ENCODE measurements at regions of chrX and their contacts with region 1.

Region 1: GRCh38 chrX:15242899-15243555 is 26.9 kb downstream of the ASB9 start:
- DNase-seq: no peak
- H3K4me3 ChIP-seq: no peak overlapping the region
- H3K27ac ChIP-seq: no peak overlapping the region
- H3K4me1 ChIP-seq: no peaks in the 10 kb centered on the region
- H3K27me3 ChIP-seq: peaks cover 0 to 3% (median 0%) of the 10 kb centered on the region in 7 donors
- CTCF ChIP-seq: peak in 7 of 11 experiments; percentile 30 to 45 (median 35)
- POLR2A ChIP-seq: no peak

Region 2: GRCh38 chrX:14039344-14039743 is 1203.7 kb before region 1 on chrX:
- intact Hi-C with region 1: loop called (anchors 5 kb)
- DNase-seq: no peak
- H3K4me3 ChIP-seq: no peak overlapping the region
- H3K27ac ChIP-seq: no peak overlapping the region
- H3K4me1 ChIP-seq: no peaks in the 10 kb centered on the region
- H3K27me3 ChIP-seq: peaks cover 0 to 9% (median 0%) of the 10 kb centered on the region in 7 donors
- CTCF ChIP-seq: peak in 10 of 11 experiments; percentile 50 to 75 (median 64)
- POLR2A ChIP-seq: no peak

Region 3: GRCh38 chrX:15194146-15194545 is 48.9 kb before region 1 on chrX:
- intact Hi-C with region 1: no loop called
- DNase-seq: no peak
- H3K4me3 ChIP-seq: no peak overlapping the region
- H3K27ac ChIP-seq: no peak overlapping the region
- H3K4me1 ChIP-seq: no peaks in the 10 kb centered on the region
- H3K27me3 ChIP-seq: peaks cover 0 to under 1% (median 0%) of the 10 kb centered on the region in 7 donors
- CTCF ChIP-seq: no peak
- POLR2A ChIP-seq: no peak